ENCODE measurements at regions of chr2 and their contacts with region 1.

Region 1: DNA sequence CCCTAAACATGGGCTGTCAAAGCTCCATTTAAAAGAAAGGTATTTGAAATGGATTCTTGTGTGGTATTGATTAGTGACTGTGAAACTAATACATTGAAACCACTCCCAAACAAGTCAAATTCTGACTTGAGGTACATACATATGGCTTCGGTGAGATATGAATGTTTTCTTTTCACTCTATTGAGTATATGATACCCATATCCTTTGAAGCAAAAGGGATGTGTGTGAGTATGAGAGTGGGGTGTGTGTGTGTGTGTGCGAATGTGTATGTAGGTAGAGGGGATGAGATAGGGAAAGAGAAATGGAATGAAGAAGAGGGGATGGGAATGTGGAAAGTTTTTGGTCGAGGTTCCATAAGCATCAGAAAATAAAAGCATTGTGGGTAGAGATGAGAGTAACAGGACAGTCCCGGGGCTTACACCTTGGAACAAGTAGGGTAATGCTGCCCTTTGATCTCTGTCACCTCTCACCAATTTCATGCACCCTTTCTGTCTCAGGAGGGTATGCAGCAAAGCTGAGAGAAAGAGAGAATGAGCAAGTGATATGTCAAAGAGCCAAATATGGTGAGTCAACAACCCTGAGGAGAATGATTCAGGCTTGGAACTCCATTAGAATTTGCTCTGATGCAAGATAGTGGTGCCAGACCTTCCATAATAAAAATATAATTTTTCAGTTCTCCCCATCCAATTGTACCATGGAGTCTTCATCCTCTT is 64.0 kb upstream of the ZEB2 start:
- H3K4me3 Mint-ChIP-seq: no peak overlapping the region
- H3K27ac Mint-ChIP-seq: no peak overlapping the region
- H3K4me1 Mint-ChIP-seq: peaks cover 35% of the 10 kb centered on the region
- H3K27me3 Mint-ChIP-seq: no peaks in the 10 kb centered on the region

Region 2: GRCh38 chr2:144310484-144310883 is 273.4 kb before region 1 on chr2:
- intact Hi-C with region 1: no loop called
- H3K4me3 Mint-ChIP-seq: no peak overlapping the region
- H3K27ac Mint-ChIP-seq: no peak overlapping the region
- H3K4me1 Mint-ChIP-seq: no peaks in the 10 kb centered on the region
- H3K27me3 Mint-ChIP-seq: no peaks in the 10 kb centered on the region

Region 3: GRCh38 chr2:144529841-144530240 is 54.1 kb before region 1 on chr2:
- intact Hi-C with region 1: loop called (anchors 10 kb)
- H3K4me3 Mint-ChIP-seq: no peak overlapping the region
- H3K27ac Mint-ChIP-seq: no peak overlapping the region
- H3K4me1 Mint-ChIP-seq: peaks cover 15% of the 10 kb centered on the region
- H3K27me3 Mint-ChIP-seq: no peaks in the 10 kb centered on the region

Region 4: DNA sequence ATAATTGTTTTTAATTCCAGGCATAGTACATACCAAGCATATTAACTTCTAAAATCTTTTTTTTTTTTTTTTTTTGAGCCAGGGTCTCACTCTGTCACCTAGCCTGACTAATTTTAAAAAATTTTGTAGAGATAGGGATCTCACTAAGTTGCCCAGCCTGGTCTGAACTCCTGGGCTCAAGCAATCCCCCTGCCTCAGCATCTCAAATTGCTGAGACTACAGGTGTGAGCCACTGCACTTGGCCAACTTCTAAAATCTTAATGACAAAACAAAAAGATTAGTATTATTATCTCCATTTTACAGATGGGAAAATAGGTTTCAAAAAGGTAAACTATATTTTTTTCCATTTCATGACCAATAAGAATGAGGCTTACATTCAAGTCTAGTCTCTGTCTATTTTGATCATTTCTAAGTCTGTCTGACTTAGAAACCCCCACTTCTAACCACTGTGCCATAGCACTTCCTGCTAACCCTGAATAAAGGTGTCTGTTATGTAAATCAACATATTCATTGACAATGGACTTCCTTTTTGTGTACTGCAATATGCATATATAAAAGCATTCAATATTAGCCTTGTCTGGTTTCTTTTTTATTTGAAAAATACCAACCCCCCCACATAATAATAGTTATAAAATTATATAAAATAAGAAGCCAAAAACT is 35.2 kb before region 1 on chr2:
- intact Hi-C with region 1: no loop called
- H3K4me3 Mint-ChIP-seq: no peak overlapping the region
- H3K27ac Mint-ChIP-seq: no peak overlapping the region
- H3K4me1 Mint-ChIP-seq: peaks cover 14% of the 10 kb centered on the region
- H3K27me3 Mint-ChIP-seq: no peaks in the 10 kb centered on the region